Esophagus muscularis mucosa (tissue), 4 donors: ENCODE measurements at regions of chr5 and their contacts with region 1.

Region 1: GRCh38 chr5:141524604-141525597 is 36.0 kb downstream of the PCDHGC5 start:
- DNase-seq: peak; percentile 97
- H3K4me3 ChIP-seq: no peak overlapping the region
- H3K27ac ChIP-seq: peak overlapping the region; percentile 73 to 83 (median 82)
- H3K4me1 ChIP-seq: peaks cover 71 to 87% (median 78%) of the 10 kb centered on the region in 4 donors
- H3K27me3 ChIP-seq: no peaks in the 10 kb centered on the region
- CTCF ChIP-seq: peak; percentile 99 to 100 (median 99)
- EP300 ChIP-seq: no peak
- POLR2A ChIP-seq: no peak

Region 2: GRCh38 chr5:141412854-141413539 is 111.9 kb before region 1 on chr5 and contains the start of gene PCDHGA10:
- intact Hi-C with region 1: loop called (anchors 10 kb)
- DNase-seq: no peak
- H3K4me3 ChIP-seq: peak within 1 kb of the TSS; percentile 24 to 41 (median 32)
- H3K27ac ChIP-seq: no peak within 1 kb of the TSS
- H3K4me1 ChIP-seq: peaks cover 0 to 7% (median 0%) of the 10 kb centered on the region in 4 donors
- H3K27me3 ChIP-seq: no peaks in the 10 kb centered on the region
- CTCF ChIP-seq: peak; percentile 16 to 35 (median 27)
- EP300 ChIP-seq: no peak
- POLR2A ChIP-seq: no peak
- total RNA-seq, gene PCDHGA10: 2.3 to 6.2 (median 4.3) TPM

Region 3: DNA sequence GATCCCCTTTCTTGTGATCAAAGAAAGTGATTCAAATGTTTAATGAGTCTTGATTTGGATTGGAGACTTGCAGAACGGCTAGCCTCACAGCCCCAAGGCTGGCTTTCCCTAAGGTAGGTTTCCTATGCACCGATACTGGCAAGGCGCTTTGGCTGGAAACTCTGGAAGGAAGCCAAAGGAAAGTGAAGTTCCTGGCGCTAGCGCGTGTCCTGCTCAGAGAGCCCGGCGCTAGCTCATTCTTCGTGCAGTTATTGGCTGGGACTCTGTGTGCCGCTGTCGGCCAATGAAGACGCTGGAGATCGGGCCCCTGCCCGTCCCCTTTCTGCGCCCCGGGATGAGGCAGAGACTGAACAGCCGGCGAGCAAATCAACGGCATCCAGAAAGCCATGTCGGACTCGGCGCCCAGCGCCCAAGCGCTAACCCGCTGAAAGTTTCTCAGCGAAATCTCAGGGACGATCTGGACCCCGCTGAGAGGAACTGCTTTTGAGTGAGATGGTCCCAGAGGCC is 49.2 kb before region 1 on chr5 and contains the start of gene PCDHGC3:
- intact Hi-C with region 1: loop called (anchors 1 kb)
- DNase-seq: peak; percentile 97
- H3K4me3 ChIP-seq: peak within 1 kb of the TSS; percentile 64 to 75 (median 68)
- H3K27ac ChIP-seq: peak within 1 kb of the TSS; percentile 84 to 93 (median 89)
- H3K4me1 ChIP-seq: peaks cover 39 to 49% (median 48%) of the 10 kb centered on the region in 4 donors
- H3K27me3 ChIP-seq: no peaks in the 10 kb centered on the region
- CTCF ChIP-seq: peak; percentile 40 to 64 (median 58)
- EP300 ChIP-seq: no peak
- POLR2A ChIP-seq: no peak
- total RNA-seq, gene PCDHGC3: 56.5 to 81.1 (median 65.5) TPM